ENCODE measurements at regions of chr6 and their contacts with region 1.

Region 1: DNA sequence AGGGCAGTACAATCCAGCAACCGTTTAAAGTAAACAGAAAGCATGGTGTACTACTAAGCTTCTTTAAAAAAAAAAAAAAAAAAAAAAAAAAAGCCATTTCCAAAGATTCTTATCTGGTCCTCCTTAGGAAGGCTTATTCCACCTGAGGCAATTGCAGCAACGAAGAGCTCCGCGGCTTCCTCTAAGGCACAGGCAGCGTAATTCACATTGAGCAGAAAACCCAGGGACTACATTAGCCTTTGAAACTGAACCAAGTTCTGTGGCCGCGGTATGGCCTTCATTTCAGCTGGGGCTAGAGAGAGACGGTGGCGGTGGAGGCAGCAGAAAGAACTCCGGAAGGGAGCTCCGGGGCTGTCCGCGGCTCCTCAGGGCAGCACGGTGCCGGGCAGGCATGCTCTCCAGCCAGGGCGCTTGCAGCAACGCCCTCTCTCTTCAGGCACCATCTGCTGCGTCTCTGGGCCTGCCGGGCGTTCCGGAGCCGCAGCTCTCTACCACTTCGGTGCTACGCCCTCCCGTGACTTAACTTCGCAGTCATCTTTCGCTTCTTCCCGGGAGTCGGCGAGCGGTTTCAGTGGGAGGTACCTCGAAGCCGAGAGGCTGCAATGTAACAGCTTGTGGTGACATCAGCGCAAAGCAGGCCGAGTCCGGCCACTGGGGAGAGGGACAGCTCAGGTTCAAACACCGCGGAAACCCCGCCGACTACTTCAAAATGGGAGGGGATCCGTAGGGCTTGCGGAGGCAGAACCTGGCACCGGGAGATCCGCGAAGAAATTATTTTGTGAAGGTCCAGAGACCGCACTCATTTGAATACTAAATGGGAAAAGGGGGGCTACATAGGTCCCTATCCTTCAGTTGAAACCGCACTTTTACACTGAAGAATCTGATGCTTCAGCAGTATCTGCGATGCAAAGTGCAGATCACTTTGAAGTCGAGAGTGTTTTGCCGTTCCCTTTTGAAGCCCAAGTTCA is 100.0 kb downstream of the DST start:
- DNase-seq: peak; percentile 87
- H3K4me3 Mint-ChIP-seq: no peak overlapping the region
- H3K27ac Mint-ChIP-seq: no peak overlapping the region
- H3K4me1 Mint-ChIP-seq: no peaks in the 10 kb centered on the region
- H3K27me3 Mint-ChIP-seq: no peaks in the 10 kb centered on the region

Region 2: GRCh38 chr6:55868771-55869479 is 673.7 kb before region 1 on chr6:
- CTCF ChIA-PET with region 1: no interaction called
- intact Hi-C with region 1: loop called (anchors 5 kb)
- DNase-seq: peak; percentile 49
- H3K4me3 Mint-ChIP-seq: no peak overlapping the region
- H3K27ac Mint-ChIP-seq: no peak overlapping the region
- H3K4me1 Mint-ChIP-seq: no peaks in the 10 kb centered on the region
- H3K27me3 Mint-ChIP-seq: no peaks in the 10 kb centered on the region

Region 3: GRCh38 chr6:56359201-56359899 is 183.3 kb before region 1 on chr6:
- CTCF ChIA-PET with region 1: interaction called, 6 read pairs
- intact Hi-C with region 1: loop called (anchors 1 kb)
- DNase-seq: peak; percentile 82
- H3K4me3 Mint-ChIP-seq: no peak overlapping the region
- H3K27ac Mint-ChIP-seq: no peak overlapping the region
- H3K4me1 Mint-ChIP-seq: no peaks in the 10 kb centered on the region
- H3K27me3 Mint-ChIP-seq: no peaks in the 10 kb centered on the region

Region 4: GRCh38 chr6:56406276-56407269 is 136.1 kb before region 1 on chr6:
- CTCF ChIA-PET with region 1: no interaction called
- intact Hi-C with region 1: loop called (anchors 5 kb)
- DNase-seq: no peak
- H3K4me3 Mint-ChIP-seq: no peak overlapping the region
- H3K27ac Mint-ChIP-seq: no peak overlapping the region
- H3K4me1 Mint-ChIP-seq: peaks cover 6% of the 10 kb centered on the region
- H3K27me3 Mint-ChIP-seq: peaks cover 6% of the 10 kb centered on the region

Region 5: GRCh38 chr6:56459025-56459810 is 83.4 kb before region 1 on chr6:
- CTCF ChIA-PET with region 1: no interaction called
- intact Hi-C with region 1: loop called (anchors 1 kb)
- DNase-seq: no peak
- H3K4me3 Mint-ChIP-seq: no peak overlapping the region
- H3K27ac Mint-ChIP-seq: no peak overlapping the region
- H3K4me1 Mint-ChIP-seq: peaks cover 21% of the 10 kb centered on the region
- H3K27me3 Mint-ChIP-seq: no peaks in the 10 kb centered on the region

Region 6: GRCh38 chr6:56570413-56571359 is 28.0 kb after region 1 on chr6:
- CTCF ChIA-PET with region 1: interaction called, 13 read pairs
- intact Hi-C with region 1: loop called (anchors 1 kb)
- DNase-seq: no peak
- H3K4me3 Mint-ChIP-seq: no peak overlapping the region
- H3K27ac Mint-ChIP-seq: no peak overlapping the region
- H3K4me1 Mint-ChIP-seq: no peaks in the 10 kb centered on the region
- H3K27me3 Mint-ChIP-seq: no peaks in the 10 kb centered on the region

Region 7: GRCh38 chr6:57172136-57173055 is 629.7 kb after region 1 on chr6 and contains the start of gene BAG2:
- CTCF ChIA-PET with region 1: no interaction called
- intact Hi-C with region 1: loop called (anchors 2 kb)
- DNase-seq: peak; percentile 88
- H3K4me3 Mint-ChIP-seq: peak within 1 kb of the TSS; percentile 92
- H3K27ac Mint-ChIP-seq: peak within 1 kb of the TSS; percentile 85
- H3K4me1 Mint-ChIP-seq: peaks cover 31% of the 10 kb centered on the region
- H3K27me3 Mint-ChIP-seq: no peaks in the 10 kb centered on the region
- total RNA-seq, gene BAG2: 6.8 to 7.0 TPM

Measured in activated naive CD4-positive, alpha-beta T cell treated with anti-CD3 and anti-CD28 coated beads for 36 hours (primary cell).